Calu3 (cell line): ENCODE measurements at regions of chr4 and their contacts with region 1.

Region 1: DNA sequence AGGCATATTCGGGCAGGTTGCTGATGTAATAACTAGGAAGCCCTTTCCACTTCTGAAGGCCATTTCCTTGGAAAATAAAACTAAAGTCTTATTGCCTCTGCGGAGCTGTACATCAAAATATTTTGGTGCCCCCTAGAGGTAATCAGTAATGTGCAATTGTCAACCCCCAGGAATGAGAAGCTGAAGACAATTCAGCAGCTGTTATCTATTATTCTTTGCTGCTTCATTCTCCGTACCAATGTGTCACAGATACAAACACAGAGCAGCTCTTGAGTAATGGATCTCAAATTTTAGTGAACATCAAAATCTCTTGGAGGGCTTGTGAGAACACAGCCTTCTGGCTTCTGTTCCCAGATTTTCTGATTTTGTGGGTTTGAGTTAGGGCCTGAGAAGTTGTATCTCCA is 3.5 kb upstream of the SLIT2 start:
- DNase-seq: peak; percentile 19
- H3K4me3 Mint-ChIP-seq: no peak overlapping the region
- H3K27ac Mint-ChIP-seq: no peak overlapping the region
- H3K4me1 Mint-ChIP-seq: no peaks in the 10 kb centered on the region
- H3K27me3 Mint-ChIP-seq: no peaks in the 10 kb centered on the region
- CTCF ChIP-seq: no peak

Region 2: GRCh38 chr4:19224820-19225219 is 1023.3 kb before region 1 on chr4:
- CTCF ChIA-PET with region 1: no interaction called
- intact Hi-C with region 1: loop called (anchors 1 kb)
- DNase-seq: no peak
- H3K4me3 Mint-ChIP-seq: no peak overlapping the region
- H3K27ac Mint-ChIP-seq: no peak overlapping the region
- H3K4me1 Mint-ChIP-seq: no peaks in the 10 kb centered on the region
- H3K27me3 Mint-ChIP-seq: no peaks in the 10 kb centered on the region
- CTCF ChIP-seq: no peak

Region 3: DNA sequence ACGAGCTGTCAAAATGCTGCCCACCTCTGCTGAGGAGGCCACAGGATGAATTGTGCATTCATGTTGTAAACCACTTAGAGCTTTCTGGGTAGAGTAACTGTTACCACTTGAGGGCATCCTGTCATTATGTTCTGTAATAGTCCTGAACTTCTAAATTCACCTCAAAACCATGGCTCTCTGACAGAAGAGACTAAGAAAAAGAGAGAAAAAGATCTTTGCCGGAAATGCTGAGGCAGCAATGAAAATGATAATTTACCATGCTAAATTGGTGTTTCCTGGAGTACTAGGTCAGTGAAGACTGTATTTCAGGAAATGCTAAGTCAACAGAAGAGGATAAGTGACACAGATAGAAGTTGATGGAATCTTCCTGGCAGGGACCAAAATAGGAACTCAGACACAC is 938.8 kb before region 1 on chr4:
- CTCF ChIA-PET with region 1: interaction called, 3 read pairs
- intact Hi-C with region 1: loop called (anchors 2 kb)
- DNase-seq: no peak
- H3K4me3 Mint-ChIP-seq: no peak overlapping the region
- H3K27ac Mint-ChIP-seq: no peak overlapping the region
- H3K4me1 Mint-ChIP-seq: no peaks in the 10 kb centered on the region
- H3K27me3 Mint-ChIP-seq: no peaks in the 10 kb centered on the region
- CTCF ChIP-seq: no peak

Region 4: GRCh38 chr4:19486400-19486799 is 761.8 kb before region 1 on chr4:
- CTCF ChIA-PET with region 1: no interaction called
- intact Hi-C with region 1: loop called (anchors 1 kb)
- DNase-seq: peak; percentile 17
- H3K4me3 Mint-ChIP-seq: no peak overlapping the region
- H3K27ac Mint-ChIP-seq: no peak overlapping the region
- H3K4me1 Mint-ChIP-seq: no peaks in the 10 kb centered on the region
- H3K27me3 Mint-ChIP-seq: no peaks in the 10 kb centered on the region
- CTCF ChIP-seq: no peak

Region 5: GRCh38 chr4:19721587-19721986 is 526.6 kb before region 1 on chr4:
- CTCF ChIA-PET with region 1: no interaction called
- intact Hi-C with region 1: no loop called
- DNase-seq: no peak
- H3K4me3 Mint-ChIP-seq: no peak overlapping the region
- H3K27ac Mint-ChIP-seq: no peak overlapping the region
- H3K4me1 Mint-ChIP-seq: peaks cover 15% of the 10 kb centered on the region
- H3K27me3 Mint-ChIP-seq: no peaks in the 10 kb centered on the region
- CTCF ChIP-seq: no peak

Region 6: GRCh38 chr4:19776021-19776459 is 472.1 kb before region 1 on chr4:
- CTCF ChIA-PET with region 1: no interaction called
- intact Hi-C with region 1: loop called (anchors 10 kb)
- DNase-seq: peak; percentile 47
- H3K4me3 Mint-ChIP-seq: peak overlapping the region; percentile 57
- H3K27ac Mint-ChIP-seq: peak overlapping the region; percentile 90
- H3K4me1 Mint-ChIP-seq: peaks cover 42% of the 10 kb centered on the region
- H3K27me3 Mint-ChIP-seq: no peaks in the 10 kb centered on the region
- CTCF ChIP-seq: no peak

Region 7: GRCh38 chr4:19945979-19946380 is 302.2 kb before region 1 on chr4:
- CTCF ChIA-PET with region 1: no interaction called
- intact Hi-C with region 1: loop called (anchors 10 kb)
- DNase-seq: no peak
- H3K4me3 Mint-ChIP-seq: no peak overlapping the region
- H3K27ac Mint-ChIP-seq: no peak overlapping the region
- H3K4me1 Mint-ChIP-seq: no peaks in the 10 kb centered on the region
- H3K27me3 Mint-ChIP-seq: no peaks in the 10 kb centered on the region
- CTCF ChIP-seq: no peak

Region 8: GRCh38 chr4:20044502-20044911 is 203.7 kb before region 1 on chr4:
- CTCF ChIA-PET with region 1: no interaction called
- intact Hi-C with region 1: loop called (anchors 10 kb)
- DNase-seq: no peak
- H3K4me3 Mint-ChIP-seq: no peak overlapping the region
- H3K27ac Mint-ChIP-seq: no peak overlapping the region
- H3K4me1 Mint-ChIP-seq: peaks cover 5% of the 10 kb centered on the region
- H3K27me3 Mint-ChIP-seq: no peaks in the 10 kb centered on the region
- CTCF ChIP-seq: no peak